ENCODE measurements at regions of chr1 and their contacts with region 1.

Region 1: GRCh38 chr1:156226116-156226538 is 13.3 kb downstream of the PMF1 start:
- H3K4me3 Mint-ChIP-seq: no peak overlapping the region
- H3K27ac Mint-ChIP-seq: no peak overlapping the region
- H3K4me1 Mint-ChIP-seq: peaks cover 22% of the 10 kb centered on the region
- H3K27me3 Mint-ChIP-seq: no peaks in the 10 kb centered on the region

Region 2: DNA sequence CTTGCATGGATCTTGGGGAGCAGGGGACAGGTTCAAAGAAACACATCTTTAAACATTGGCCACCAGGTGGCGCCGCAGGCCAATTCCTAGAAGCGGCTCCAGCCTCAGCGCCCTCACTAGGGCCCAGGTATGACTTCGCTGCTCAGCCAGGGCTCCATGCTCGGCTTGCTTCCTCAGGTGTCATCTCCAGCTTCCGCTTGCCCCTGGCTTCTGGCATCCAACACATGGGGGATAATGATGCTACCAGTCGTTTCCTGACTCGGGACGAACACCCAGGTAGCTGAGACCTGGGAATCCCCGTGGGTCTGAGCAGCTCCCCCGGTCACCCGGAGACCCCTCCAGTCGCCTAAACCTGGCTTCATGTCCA is 135.3 kb before region 1 on chr1:
- intact Hi-C with region 1: loop called (anchors 5 kb)
- H3K4me3 Mint-ChIP-seq: peak overlapping the region; percentile 48
- H3K27ac Mint-ChIP-seq: peak overlapping the region; percentile 78
- H3K4me1 Mint-ChIP-seq: peaks cover 54% of the 10 kb centered on the region
- H3K27me3 Mint-ChIP-seq: peaks cover 61% of the 10 kb centered on the region

Region 3: DNA sequence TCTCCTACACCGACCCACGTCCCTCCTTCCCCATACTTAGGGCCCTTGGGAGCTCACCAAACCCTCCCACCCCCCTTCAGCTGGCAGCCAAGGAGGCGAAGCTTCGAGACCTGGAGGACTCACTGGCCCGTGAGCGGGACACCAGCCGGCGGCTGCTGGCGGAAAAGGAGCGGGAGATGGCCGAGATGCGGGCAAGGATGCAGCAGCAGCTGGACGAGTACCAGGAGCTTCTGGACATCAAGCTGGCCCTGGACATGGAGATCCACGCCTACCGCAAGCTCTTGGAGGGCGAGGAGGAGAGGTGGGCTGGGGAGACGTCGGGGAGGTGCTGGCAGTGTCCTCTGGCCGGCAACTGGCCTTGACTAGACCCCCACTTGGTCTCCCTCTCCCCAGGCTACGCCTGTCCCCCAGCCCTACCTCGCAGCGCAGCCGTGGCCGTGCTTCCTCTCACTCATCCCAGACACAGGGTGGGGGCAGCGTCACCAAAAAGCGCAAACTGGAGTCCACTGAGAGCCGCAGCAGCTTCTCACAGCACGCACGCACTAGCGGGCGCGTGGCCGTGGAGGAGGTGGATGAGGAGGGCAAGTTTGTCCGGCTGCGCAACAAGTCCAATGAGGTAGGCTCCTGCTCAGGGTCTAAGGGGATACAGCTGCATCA is 90.2 kb before region 1 on chr1:
- intact Hi-C with region 1: no loop called
- H3K4me3 Mint-ChIP-seq: no peak overlapping the region
- H3K27ac Mint-ChIP-seq: no peak overlapping the region
- H3K4me1 Mint-ChIP-seq: peaks cover 6% of the 10 kb centered on the region
- H3K27me3 Mint-ChIP-seq: peaks cover 52% of the 10 kb centered on the region

Region 4: DNA sequence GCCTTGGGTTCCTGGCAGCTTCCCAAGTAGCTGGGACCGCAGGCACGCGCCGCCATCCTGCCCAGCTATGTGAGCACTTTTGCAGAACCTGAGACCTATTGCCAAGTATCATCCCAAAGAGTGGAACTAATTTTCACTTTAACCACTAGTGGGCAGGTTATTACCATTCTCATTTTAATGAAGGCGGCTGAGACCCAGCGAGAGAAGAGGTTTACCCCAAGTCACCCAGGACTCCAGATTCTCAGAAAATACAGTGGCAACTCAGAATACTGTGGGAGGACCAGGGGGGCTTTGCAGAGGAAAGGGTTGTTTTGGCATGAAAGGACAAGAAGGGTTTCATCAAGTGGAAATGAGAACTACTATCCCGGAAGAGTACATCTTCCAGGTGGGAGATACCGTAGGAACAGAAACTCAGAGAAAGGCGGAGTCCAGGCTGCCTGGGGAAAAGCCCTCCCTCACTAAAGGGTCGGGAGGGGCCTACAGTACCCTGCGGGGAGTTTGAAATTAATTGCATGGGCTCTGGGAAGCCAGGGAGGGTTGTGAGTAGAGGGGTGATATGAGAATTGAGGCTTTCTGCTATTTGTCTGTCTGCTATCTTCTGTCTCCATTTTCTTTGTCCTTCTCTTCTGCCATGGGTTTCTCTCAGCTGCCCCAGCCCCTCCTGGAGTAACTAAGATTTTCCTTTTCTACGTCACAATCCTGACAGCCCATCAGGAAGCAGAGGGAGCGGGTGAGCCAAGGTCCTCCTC is 79.9 kb before region 1 on chr1:
- intact Hi-C with region 1: loop called (anchors 1 kb)
- H3K4me3 Mint-ChIP-seq: peak overlapping the region; percentile 37
- H3K27ac Mint-ChIP-seq: peak overlapping the region; percentile 98
- H3K4me1 Mint-ChIP-seq: peaks cover 58% of the 10 kb centered on the region
- H3K27me3 Mint-ChIP-seq: no peaks in the 10 kb centered on the region

Measured in dendritic cell treated with granulocyte-macrophage colony-stimulating factor and Interleukin-4, amounts not matched to agents 40 ng/mL and 50 ng/mL, for 4 days (primary cell).